Adrenal gland (tissue), 19 donors: ENCODE measurements at regions of chr17 and their contacts with region 1.

Region 1: GRCh38 chr17:8091033-8091687 is 3.6 kb upstream of the ALOX12B start:
- DNase-seq: no peak
- H3K4me3 ChIP-seq: no peak overlapping the region
- H3K27ac ChIP-seq: no peak overlapping the region
- H3K4me1 ChIP-seq: no peaks in the 10 kb centered on the region
- H3K27me3 ChIP-seq: peaks cover 5% of the 10 kb centered on the region
- CTCF ChIP-seq: no peak
- POLR2A ChIP-seq: no peak

Region 2: GRCh38 chr17:7897773-7898172 is 193.4 kb before region 1 on chr17:
- intact Hi-C with region 1: no loop called
- DNase-seq: peak in 6 of 7 donors; percentile 16 to 69 (median 54)
- H3K4me3 ChIP-seq: no peak overlapping the region
- H3K27ac ChIP-seq: peak overlapping the region in 1 of 5 donors; percentile 21
- H3K4me1 ChIP-seq: no peaks in the 10 kb centered on the region
- H3K27me3 ChIP-seq: no peaks in the 10 kb centered on the region
- CTCF ChIP-seq: peak; percentile 37 to 94 (median 76)
- POLR2A ChIP-seq: no peak

Region 3: DNA sequence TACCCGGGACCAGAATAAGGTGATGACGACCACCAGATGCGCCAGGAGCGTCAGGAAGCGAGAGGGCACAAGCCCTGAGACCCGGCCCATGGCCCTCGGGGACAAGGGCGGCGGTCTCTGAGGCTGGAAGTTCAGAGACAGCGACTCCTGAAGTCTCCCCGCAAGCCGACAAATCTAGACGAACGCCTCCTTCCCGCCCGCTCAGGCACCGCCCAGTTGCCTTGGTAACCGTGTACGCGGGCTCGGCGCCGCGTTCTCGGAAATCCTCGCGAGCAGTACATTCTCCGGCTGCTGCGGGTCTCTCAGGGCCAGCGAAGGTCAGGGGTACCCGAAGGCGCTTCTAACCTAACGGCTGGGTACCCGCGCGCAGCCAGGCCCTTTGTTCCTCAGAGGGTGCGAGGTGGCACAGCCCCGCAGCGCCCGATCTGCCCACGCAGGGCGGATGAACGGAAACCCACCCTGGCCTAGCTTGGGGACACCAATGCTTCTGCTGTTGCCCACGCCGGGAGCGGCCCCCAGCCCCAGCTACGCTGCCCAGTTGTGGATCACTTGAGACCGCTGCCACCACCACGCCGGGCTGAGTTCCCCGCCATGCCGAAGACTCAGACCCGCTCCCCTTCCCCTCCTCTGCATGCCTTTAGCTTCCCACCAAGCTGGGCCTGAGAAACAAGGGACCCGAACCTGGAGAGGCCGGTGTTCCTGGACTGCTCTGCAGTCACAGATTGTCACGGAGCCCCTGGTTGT is 85.2 kb after region 1 on chr17 and contains the start of gene TMEM107:
- intact Hi-C with region 1: no loop called
- DNase-seq: peak; percentile 84 to 93 (median 89)
- H3K4me3 ChIP-seq: peak within 1 kb of the TSS in 3 of 4 donors; percentile 22 to 54 (median 42)
- H3K27ac ChIP-seq: peak within 1 kb of the TSS; percentile 2 to 99 (median 53)
- H3K4me1 ChIP-seq: peaks cover 9 to 38% of the 10 kb centered on the region in 2 donors
- H3K27me3 ChIP-seq: no peaks in the 10 kb centered on the region
- CTCF ChIP-seq: no peak
- POLR2A ChIP-seq: no peak
- total RNA-seq, gene TMEM107: 6.2 to 33.6 (median 20.8) TPM

Region 4: DNA sequence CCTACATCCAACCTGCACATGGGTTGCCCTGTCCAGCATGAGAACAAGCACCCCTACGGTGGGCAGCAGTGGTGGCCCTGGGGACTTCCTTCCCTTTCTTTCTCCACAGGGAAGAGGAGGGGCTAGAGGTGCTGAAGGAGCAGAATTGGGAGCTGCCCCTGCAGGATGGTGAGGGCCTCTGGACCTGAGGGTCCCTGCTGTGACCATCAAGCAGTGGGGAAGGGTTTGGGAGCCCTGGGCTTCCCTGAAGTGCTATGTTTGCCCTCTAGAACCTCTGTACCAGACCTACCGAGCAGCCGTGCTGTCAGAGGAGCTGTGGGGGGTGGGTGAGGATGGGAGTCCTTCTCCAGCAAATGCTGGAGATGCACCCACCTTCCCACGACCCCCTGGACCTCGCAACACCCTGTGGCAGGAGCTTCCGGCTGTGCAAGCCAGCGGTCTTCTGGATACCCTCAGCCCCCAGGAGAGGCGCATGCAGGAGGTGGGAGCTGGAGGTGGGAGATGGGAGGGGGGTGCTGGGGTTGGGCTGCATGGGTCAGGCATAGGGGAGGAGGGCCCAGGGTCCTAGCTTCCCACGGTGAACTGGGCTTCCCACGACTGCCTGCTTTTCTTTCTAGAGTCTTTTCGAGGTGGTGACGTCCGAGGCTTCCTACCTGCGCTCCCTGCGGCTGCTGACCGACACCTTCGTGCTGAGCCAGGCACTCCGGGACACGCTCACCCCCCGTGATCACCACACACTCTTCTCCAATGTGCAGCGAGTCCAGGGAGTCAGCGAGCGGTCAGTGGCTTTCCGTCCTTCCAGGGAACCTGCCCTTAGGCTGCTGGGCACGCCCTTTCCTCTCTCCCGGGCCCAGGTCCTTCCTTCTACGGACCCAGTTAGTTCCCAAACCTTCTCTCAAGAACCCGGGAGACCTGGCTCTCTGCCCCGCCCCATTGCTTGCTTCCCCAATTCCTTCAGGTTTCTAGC is 223.9 kb after region 1 on chr17:
- intact Hi-C with region 1: loop called in 1 of 2 experiments (anchors 10 kb)
- DNase-seq: no peak
- H3K4me3 ChIP-seq: no peak overlapping the region
- H3K27ac ChIP-seq: no peak overlapping the region
- H3K4me1 ChIP-seq: no peaks in the 10 kb centered on the region
- H3K27me3 ChIP-seq: peaks cover 30% of the 10 kb centered on the region
- CTCF ChIP-seq: no peak
- POLR2A ChIP-seq: no peak